HCT116 (cell line): ENCODE measurements at regions of chr12 and their contacts with region 1.

Region 1: GRCh38 chr12:94101738-94102660 is 46.4 kb upstream of the PLXNC1 start:
- DNase-seq: peak; percentile 87
- ATAC-seq: peak; percentile 85
- H3K4me3 ChIP-seq: peak overlapping the region; percentile 43 to 55
- H3K27ac ChIP-seq: no peak overlapping the region
- H3K4me1 ChIP-seq: peaks cover 6 to 18% of the 10 kb centered on the region in 2 experiments
- H3K27me3 ChIP-seq: no peaks in the 10 kb centered on the region
- CTCF ChIP-seq: peak; percentile 63 to 75 (median 74)
- POLR2A ChIP-seq: no peak
- RAD21 ChIP-seq: peak; percentile 92

Region 2: GRCh38 chr12:92987362-92987761 is 1114.6 kb before region 1 on chr12:
- CTCF ChIA-PET with region 1: interaction called, 16 read pairs
- POLR2A ChIA-PET with region 1: no interaction called
- RAD21 ChIA-PET with region 1: interaction called in 1 of 2 experiments, 3 read pairs
- intact Hi-C with region 1: loop called (anchors 2 kb)
- DNase-seq: peak; percentile 42
- ATAC-seq: peak; percentile 78
- H3K4me3 ChIP-seq: no peak overlapping the region
- H3K27ac ChIP-seq: no peak overlapping the region
- H3K4me1 ChIP-seq: 0 out of 4 replicates have a peak, but pooled peaks cover 0 to 4% of the 10 kb centered on the region in 2 experiments
- H3K27me3 ChIP-seq: no peaks in the 10 kb centered on the region
- CTCF ChIP-seq: peak; percentile 39 to 81 (median 65); a peak in 5 of 6 replicates
- POLR2A ChIP-seq: no peak
- RAD21 ChIP-seq: peak; percentile 86

Region 3: GRCh38 chr12:93502802-93503623 is 599.0 kb before region 1 on chr12:
- CTCF ChIA-PET with region 1: interaction called, 143 read pairs
- POLR2A ChIA-PET with region 1: interaction called, 7 read pairs
- RAD21 ChIA-PET with region 1: interaction called, 4 to 21 read pairs
- intact Hi-C with region 1: loop called (anchors 2 kb)
- DNase-seq: peak; percentile 21
- ATAC-seq: no peak
- H3K4me3 ChIP-seq: no peak overlapping the region
- H3K27ac ChIP-seq: no peak overlapping the region
- H3K4me1 ChIP-seq: 0 out of 4 replicates have a peak, but pooled peaks cover 0 to 4% of the 10 kb centered on the region in 2 experiments
- H3K27me3 ChIP-seq: no peaks in the 10 kb centered on the region
- CTCF ChIP-seq: peak; percentile 71 to 88 (median 76); a peak in 5 of 6 replicates
- POLR2A ChIP-seq: no peak
- RAD21 ChIP-seq: peak; percentile 78

Region 4: GRCh38 chr12:93569656-93570551 is 532.1 kb before region 1 on chr12:
- CTCF ChIA-PET with region 1: interaction called, 42 read pairs
- POLR2A ChIA-PET with region 1: interaction called, 5 read pairs
- RAD21 ChIA-PET with region 1: interaction called, 11 to 18 read pairs
- intact Hi-C with region 1: loop called (anchors 1 kb)
- DNase-seq: peak; percentile 72
- ATAC-seq: peak; percentile 75
- H3K4me3 ChIP-seq: peak overlapping the region; percentile 72 to 73
- H3K27ac ChIP-seq: peak overlapping the region; percentile 93
- H3K4me1 ChIP-seq: peaks cover 2 to 24% of the 10 kb centered on the region in 2 experiments; a peak in 3 of 4 replicates
- H3K27me3 ChIP-seq: no peaks in the 10 kb centered on the region
- CTCF ChIP-seq: peak; percentile 73 to 84 (median 78)
- POLR2A ChIP-seq: no peak
- RAD21 ChIP-seq: peak; percentile 91

Region 5: GRCh38 chr12:93785262-93786010 is 316.6 kb before region 1 on chr12:
- CTCF ChIA-PET with region 1: no interaction called
- POLR2A ChIA-PET with region 1: no interaction called
- RAD21 ChIA-PET with region 1: no interaction called
- intact Hi-C with region 1: loop called (anchors 5 kb)
- DNase-seq: peak; percentile 85
- ATAC-seq: peak; percentile 88
- H3K4me3 ChIP-seq: peak overlapping the region in 1 of 2 experiments; percentile 14; a peak in 2 of 4 replicates
- H3K27ac ChIP-seq: peak overlapping the region; percentile 88
- H3K4me1 ChIP-seq: peaks cover 40 to 78% of the 10 kb centered on the region in 2 experiments
- H3K27me3 ChIP-seq: no peaks in the 10 kb centered on the region
- CTCF ChIP-seq: no peak
- POLR2A ChIP-seq: no peak
- RAD21 ChIP-seq: no peak

Region 6: GRCh38 chr12:93879476-93880421 is 222.2 kb before region 1 on chr12:
- CTCF ChIA-PET with region 1: no interaction called
- POLR2A ChIA-PET with region 1: no interaction called
- RAD21 ChIA-PET with region 1: no interaction called
- intact Hi-C with region 1: no loop called
- DNase-seq: no peak
- ATAC-seq: no peak
- H3K4me3 ChIP-seq: no peak overlapping the region
- H3K27ac ChIP-seq: no peak overlapping the region
- H3K4me1 ChIP-seq: no peaks in the 10 kb centered on the region
- H3K27me3 ChIP-seq: no peaks in the 10 kb centered on the region
- CTCF ChIP-seq: no peak
- POLR2A ChIP-seq: no peak
- RAD21 ChIP-seq: no peak

Region 7: GRCh38 chr12:94112132-94112531 is 10.1 kb after region 1 on chr12:
- CTCF ChIA-PET with region 1: interaction called, 14 read pairs
- POLR2A ChIA-PET with region 1: no interaction called
- RAD21 ChIA-PET with region 1: no interaction called
- intact Hi-C with region 1: no loop called
- DNase-seq: no peak
- ATAC-seq: no peak
- H3K4me3 ChIP-seq: no peak overlapping the region
- H3K27ac ChIP-seq: no peak overlapping the region
- H3K4me1 ChIP-seq: 0 out of 4 replicates have a peak, but pooled peaks cover 0 to 3% of the 10 kb centered on the region in 2 experiments
- H3K27me3 ChIP-seq: no peaks in the 10 kb centered on the region
- CTCF ChIP-seq: no peak
- POLR2A ChIP-seq: no peak
- RAD21 ChIP-seq: no peak